CD4-positive, alpha-beta T cell (primary cell): ENCODE measurements at regions of chr3 and their contacts with region 1.

Region 1: DNA sequence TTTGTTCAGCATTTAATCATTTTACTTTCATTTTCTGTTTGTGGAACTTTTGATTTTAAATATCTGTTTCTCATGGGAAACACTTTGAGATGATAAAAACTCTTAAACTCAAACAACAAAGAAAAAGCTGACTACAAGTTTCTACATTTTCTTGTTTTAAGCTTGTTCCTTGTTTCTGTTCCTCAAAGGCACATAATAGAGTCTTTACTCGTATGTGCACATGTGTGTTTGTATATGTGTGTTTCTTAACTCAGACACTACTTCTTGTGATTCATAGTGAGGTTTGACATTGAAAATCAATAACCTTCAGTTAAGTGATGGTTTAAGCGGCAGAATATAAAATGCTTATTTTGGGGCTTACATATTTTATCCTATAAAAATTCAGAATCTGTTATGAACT is 786.7 kb upstream of the EPHA6 start:
- DNase-seq: no peak
- ATAC-seq: no peak
- H3K4me3 ChIP-seq: no peak overlapping the region
- H3K4me3 Mint-ChIP-seq: no peak overlapping the region
- H3K27ac ChIP-seq: no peak overlapping the region
- H3K27ac Mint-ChIP-seq: no peak overlapping the region
- H3K4me1 ChIP-seq: no peaks in the 10 kb centered on the region
- H3K4me1 Mint-ChIP-seq: no peaks in the 10 kb centered on the region
- H3K27me3 ChIP-seq: no peaks in the 10 kb centered on the region
- H3K27me3 Mint-ChIP-seq: no peaks in the 10 kb centered on the region
- CTCF ChIP-seq: no peak

Region 2: GRCh38 chr3:95971573-95971972 is 56.1 kb before region 1 on chr3:
- CTCF ChIA-PET with region 1: no interaction called
- POLR2A ChIA-PET with region 1: no interaction called
- intact Hi-C with region 1: loop called in 1 of 2 experiments (anchors 5 kb)
- DNase-seq: no peak
- ATAC-seq: no peak
- H3K4me3 ChIP-seq: no peak overlapping the region
- H3K4me3 Mint-ChIP-seq: no peak overlapping the region
- H3K27ac ChIP-seq: no peak overlapping the region
- H3K27ac Mint-ChIP-seq: no peak overlapping the region
- H3K4me1 ChIP-seq: no peaks in the 10 kb centered on the region
- H3K4me1 Mint-ChIP-seq: no peaks in the 10 kb centered on the region
- H3K27me3 ChIP-seq: no peaks in the 10 kb centered on the region
- H3K27me3 Mint-ChIP-seq: no peaks in the 10 kb centered on the region
- CTCF ChIP-seq: no peak